Esophagus muscularis mucosa (tissue), 4 donors: ENCODE measurements at regions of chr7 and their contacts with region 1.

Region 1: GRCh38 chr7:115910541-115911164 is 119.9 kb downstream of the TFEC start:
- DNase-seq: no peak
- H3K4me3 ChIP-seq: no peak overlapping the region
- H3K27ac ChIP-seq: no peak overlapping the region
- H3K4me1 ChIP-seq: peaks cover 0 to 16% (median 8%) of the 10 kb centered on the region in 4 donors
- H3K27me3 ChIP-seq: no peaks in the 10 kb centered on the region
- CTCF ChIP-seq: peak; percentile 54 to 68 (median 56)
- EP300 ChIP-seq: no peak
- POLR2A ChIP-seq: no peak

Region 2: GRCh38 chr7:114026486-114027089 is 1884.1 kb before region 1 on chr7:
- intact Hi-C with region 1: loop called (anchors 10 kb)
- DNase-seq: no peak
- H3K4me3 ChIP-seq: no peak overlapping the region
- H3K27ac ChIP-seq: no peak overlapping the region
- H3K4me1 ChIP-seq: no peaks in the 10 kb centered on the region
- H3K27me3 ChIP-seq: no peaks in the 10 kb centered on the region
- CTCF ChIP-seq: peak; percentile 56 to 67 (median 60)
- EP300 ChIP-seq: no peak
- POLR2A ChIP-seq: no peak

Region 3: DNA sequence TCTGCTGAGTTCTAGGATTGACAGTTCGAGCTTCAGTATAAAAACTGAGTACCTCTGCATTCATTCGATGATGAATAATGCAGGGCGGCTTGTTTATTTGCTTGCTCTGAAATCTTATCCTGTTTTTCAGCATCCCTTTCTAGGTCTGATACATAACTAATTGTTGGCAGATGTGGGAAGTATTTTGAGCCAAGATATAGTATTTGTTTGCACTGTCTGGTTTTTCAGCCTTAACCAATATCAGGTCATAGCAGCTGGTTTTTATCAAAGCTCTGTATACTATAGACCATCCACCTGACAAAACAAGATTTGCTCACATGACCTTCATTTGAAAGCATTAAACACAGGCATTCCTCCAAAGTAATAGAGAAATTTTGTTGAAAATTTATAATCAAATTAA is 41.4 kb before region 1 on chr7:
- intact Hi-C with region 1: no loop called
- DNase-seq: no peak
- H3K4me3 ChIP-seq: no peak overlapping the region
- H3K27ac ChIP-seq: no peak overlapping the region
- H3K4me1 ChIP-seq: no peaks in the 10 kb centered on the region
- H3K27me3 ChIP-seq: no peaks in the 10 kb centered on the region
- CTCF ChIP-seq: no peak
- EP300 ChIP-seq: no peak
- POLR2A ChIP-seq: no peak